Calu3 (cell line): ENCODE measurements at regions of chr15 and their contacts with region 1.

Region 1: DNA sequence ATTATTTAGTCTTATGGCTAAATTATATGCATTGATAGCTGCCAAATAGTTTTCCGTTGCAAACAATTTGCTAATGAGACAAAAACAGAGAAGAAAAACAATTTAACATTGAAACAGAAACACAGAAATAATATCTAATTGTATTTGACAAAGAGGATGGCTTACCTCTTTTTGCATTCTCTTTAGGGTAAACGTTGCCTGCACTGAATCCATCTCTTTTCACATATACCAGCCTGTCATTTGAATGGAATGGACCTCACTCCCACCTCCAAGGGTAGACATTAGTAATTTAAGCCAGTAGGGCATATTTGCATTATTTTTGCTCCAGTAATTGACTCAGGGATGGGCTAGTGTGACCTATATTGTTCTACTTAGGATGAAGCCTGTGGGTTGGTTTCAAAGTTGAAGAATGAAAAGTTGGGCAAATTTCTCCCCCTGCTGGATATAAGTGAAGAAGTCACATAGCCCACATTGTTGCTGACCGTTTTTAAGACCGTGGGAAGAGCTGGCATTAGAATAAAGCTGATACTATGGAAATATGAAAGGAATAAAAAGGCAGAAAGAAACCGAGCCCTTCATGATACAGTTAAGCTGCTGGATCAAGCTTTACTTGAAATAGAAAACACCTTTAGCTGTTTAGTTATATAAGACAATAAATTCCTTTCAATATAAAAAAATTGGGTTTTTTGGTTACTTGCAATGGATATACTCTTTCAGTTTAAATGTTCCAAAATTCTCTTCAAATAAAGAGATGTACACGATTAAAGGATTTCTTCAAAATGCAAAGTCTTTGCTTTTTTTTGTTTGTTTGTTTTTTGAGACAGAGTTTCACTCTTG is 26.9 kb downstream of the PIERCE2 start:
- DNase-seq: peak; percentile 34
- H3K4me3 Mint-ChIP-seq: no peak overlapping the region
- H3K27ac Mint-ChIP-seq: no peak overlapping the region
- H3K4me1 Mint-ChIP-seq: peaks cover 7% of the 10 kb centered on the region
- H3K27me3 Mint-ChIP-seq: no peaks in the 10 kb centered on the region
- CTCF ChIP-seq: peak; percentile 43

Region 2: GRCh38 chr15:53962332-53963241 is 1472.6 kb before region 1 on chr15:
- CTCF ChIA-PET with region 1: no interaction called
- intact Hi-C with region 1: loop called (anchors 5 kb)
- DNase-seq: peak; percentile 67
- H3K4me3 Mint-ChIP-seq: no peak overlapping the region
- H3K27ac Mint-ChIP-seq: no peak overlapping the region
- H3K4me1 Mint-ChIP-seq: no peaks in the 10 kb centered on the region
- H3K27me3 Mint-ChIP-seq: no peaks in the 10 kb centered on the region
- CTCF ChIP-seq: peak; percentile 73

Region 3: DNA sequence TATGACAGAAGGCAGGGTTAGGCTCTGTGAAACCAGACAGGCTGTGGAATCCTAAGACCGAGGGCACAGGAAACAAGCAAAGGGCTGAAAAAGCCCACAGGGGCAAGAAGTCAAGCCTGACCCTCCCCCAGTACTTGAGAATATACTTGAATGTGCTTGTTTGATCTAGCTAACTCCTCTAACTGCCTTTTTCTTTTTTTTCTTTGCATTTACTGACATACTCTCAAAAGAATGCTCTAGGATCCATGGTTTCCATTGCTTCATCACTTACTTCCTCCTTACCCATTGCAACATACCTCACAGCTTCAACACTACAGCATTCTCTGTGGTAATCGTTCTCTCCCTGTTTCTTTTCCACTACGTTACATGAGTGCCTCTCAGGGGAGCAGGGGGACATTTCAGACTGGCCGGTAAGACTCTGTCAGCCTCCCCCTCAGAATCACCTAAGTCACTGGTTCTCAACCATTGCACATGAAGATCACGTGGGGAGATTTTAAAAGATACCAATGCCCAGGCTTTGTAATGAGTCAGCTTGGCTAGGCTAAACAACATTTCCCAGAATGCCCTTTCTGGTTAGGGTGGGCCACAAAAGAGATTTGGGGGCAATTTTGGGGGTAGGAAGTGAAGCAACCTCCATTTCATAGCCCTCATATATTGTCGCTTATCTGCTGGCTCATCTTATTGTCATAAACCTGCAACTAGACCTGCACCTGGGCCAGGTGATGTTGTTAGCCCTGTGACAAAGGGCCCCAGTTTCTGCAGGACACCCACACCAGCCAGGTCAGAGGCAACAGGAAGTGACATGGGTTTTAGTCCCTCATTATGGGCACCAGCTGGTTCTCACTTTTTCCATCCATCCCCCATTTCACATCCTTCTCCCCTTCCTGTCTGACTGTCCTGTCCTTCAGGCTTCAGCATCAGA is 213.9 kb before region 1 on chr15:
- CTCF ChIA-PET with region 1: interaction called, 16 read pairs
- intact Hi-C with region 1: loop called (anchors 1 kb)
- DNase-seq: peak; percentile 45
- H3K4me3 Mint-ChIP-seq: peak overlapping the region; percentile 24
- H3K27ac Mint-ChIP-seq: peak overlapping the region; percentile 72
- H3K4me1 Mint-ChIP-seq: peaks cover 25% of the 10 kb centered on the region
- H3K27me3 Mint-ChIP-seq: no peaks in the 10 kb centered on the region
- CTCF ChIP-seq: no peak

Region 4: GRCh38 chr15:55318588-55319494 is 116.4 kb before region 1 on chr15 and contains the starts of genes PIGB and PIGBOS1:
- CTCF ChIA-PET with region 1: interaction called, 10 read pairs
- intact Hi-C with region 1: loop called (anchors 2 kb)
- DNase-seq: peak; percentile 85
- H3K4me3 Mint-ChIP-seq: peak within 1 kb of the TSS; percentile 98
- H3K27ac Mint-ChIP-seq: peak within 1 kb of the TSS; percentile 99
- H3K4me1 Mint-ChIP-seq: peaks cover 17% of the 10 kb centered on the region
- H3K27me3 Mint-ChIP-seq: no peaks in the 10 kb centered on the region
- CTCF ChIP-seq: no peak
- total RNA-seq, gene PIGB: 17.5 and 23.5 TPM in 2 replicates
- total RNA-seq, gene PIGBOS1: 16.6 and 17.1 TPM in 2 replicates

Region 5: DNA sequence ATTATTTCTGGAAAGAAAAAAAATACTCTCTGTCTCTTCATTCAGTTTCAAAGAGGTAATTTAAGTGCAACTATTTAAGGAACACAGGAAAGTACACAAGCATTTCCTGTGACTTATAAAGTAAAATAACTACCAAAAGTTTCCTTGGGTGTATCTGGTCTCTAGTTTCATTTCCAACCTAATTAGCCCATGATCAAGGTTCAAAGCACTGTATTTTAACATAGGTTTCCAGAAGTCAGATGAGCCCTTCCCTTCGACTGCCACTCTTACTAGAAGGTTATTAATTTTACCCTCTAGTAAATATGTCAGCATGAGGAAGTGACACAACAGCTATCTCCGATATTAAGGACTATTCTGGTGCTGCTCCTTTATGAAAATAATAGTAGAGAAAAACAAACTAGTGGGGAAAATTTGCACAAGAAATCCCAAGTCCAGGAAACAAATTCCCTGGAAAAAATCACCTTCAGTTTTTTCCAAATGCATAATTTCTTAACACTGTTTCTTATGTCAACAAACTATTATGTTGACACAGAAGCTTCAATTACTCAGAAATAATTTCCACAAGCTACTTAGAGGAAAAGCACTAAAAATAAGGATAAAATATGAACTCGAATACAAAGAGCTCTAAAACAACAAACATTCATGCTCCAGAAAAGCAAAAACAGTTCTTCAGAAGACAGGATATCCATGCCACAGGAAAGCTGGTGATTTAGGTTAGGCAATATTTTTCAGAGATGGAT is 62.3 kb before region 1 on chr15:
- CTCF ChIA-PET with region 1: interaction called, 6 read pairs
- intact Hi-C with region 1: loop called (anchors 10 kb)
- DNase-seq: no peak
- H3K4me3 Mint-ChIP-seq: no peak overlapping the region
- H3K27ac Mint-ChIP-seq: no peak overlapping the region
- H3K4me1 Mint-ChIP-seq: peaks cover 12% of the 10 kb centered on the region
- H3K27me3 Mint-ChIP-seq: no peaks in the 10 kb centered on the region
- CTCF ChIP-seq: no peak

Region 6: GRCh38 chr15:55407949-55408791 is 27.0 kb before region 1 on chr15 and contains the starts of genes CCPG1 and PIERCE2:
- CTCF ChIA-PET with region 1: interaction called, 19 read pairs
- intact Hi-C with region 1: no loop called
- DNase-seq: peak; percentile 97
- H3K4me3 Mint-ChIP-seq: peak within 1 kb of the TSS; percentile 81
- H3K27ac Mint-ChIP-seq: peak within 1 kb of the TSS; percentile 75
- H3K4me1 Mint-ChIP-seq: peaks cover 13% of the 10 kb centered on the region
- H3K27me3 Mint-ChIP-seq: no peaks in the 10 kb centered on the region
- CTCF ChIP-seq: peak; percentile 94
- total RNA-seq, gene CCPG1: 54.5 and 54.6 TPM in 2 replicates
- total RNA-seq, gene PIERCE2: 2.9 and 3.1 TPM in 2 replicates

Region 7: DNA sequence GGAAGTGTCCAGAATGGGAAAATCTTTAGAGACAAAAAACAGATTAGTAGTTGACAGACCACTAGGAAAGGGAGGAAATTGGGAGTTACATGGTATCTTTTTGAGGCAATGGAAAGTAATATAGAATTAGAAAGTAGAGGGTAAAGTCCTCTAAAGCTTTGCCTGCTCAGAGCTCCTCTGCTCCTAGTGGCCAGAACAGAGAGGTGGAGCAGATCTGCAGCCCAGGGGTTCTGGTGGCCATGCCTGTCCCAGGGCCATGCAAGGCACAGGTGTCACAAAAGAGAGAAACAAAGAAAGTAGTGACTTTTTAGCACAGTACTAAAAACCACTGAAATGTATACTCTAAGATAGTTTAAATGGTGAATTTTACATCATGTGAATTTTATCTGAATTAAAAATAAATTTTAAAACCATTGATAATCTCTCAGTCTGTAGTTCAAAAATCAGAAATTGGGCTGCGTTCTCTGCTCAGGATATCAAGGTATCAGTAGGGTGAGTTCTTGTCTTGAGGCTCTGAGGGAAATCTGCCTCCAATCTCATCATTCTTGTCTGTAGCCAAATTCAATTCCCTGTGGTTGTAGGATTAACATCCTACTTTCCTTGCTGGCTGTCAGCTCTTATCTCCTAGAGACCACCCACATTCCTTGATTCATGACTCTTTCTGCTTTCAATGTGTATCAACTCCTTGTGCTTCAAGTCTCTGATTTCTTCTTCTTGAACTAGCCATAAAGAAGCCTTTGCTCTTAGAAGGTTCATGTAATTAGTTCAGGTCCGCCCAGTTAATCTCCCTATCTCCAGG is 129.3 kb after region 1 on chr15:
- CTCF ChIA-PET with region 1: no interaction called
- intact Hi-C with region 1: no loop called
- DNase-seq: no peak
- H3K4me3 Mint-ChIP-seq: no peak overlapping the region
- H3K27ac Mint-ChIP-seq: no peak overlapping the region
- H3K4me1 Mint-ChIP-seq: no peaks in the 10 kb centered on the region
- H3K27me3 Mint-ChIP-seq: no peaks in the 10 kb centered on the region
- CTCF ChIP-seq: no peak

Region 8: DNA sequence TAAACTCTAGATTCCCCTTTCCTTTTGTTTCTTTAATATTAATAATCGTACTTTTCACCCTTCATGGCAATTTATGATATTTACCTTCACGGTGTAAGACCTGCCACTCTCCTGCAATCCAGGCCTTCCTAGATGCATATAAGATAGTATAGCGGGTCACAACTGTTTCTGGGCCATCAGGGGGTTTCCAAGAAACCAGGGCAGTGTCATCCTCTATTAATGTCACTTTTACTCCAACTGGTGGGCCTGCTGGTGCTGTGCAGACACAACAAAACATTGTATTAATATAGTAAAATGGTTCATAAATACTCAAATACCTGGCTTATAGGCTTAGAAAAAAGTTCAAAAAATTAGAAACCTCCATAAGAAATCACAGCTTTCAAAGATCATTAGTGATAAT is 201.9 kb after region 1 on chr15:
- CTCF ChIA-PET with region 1: interaction called, 6 read pairs
- intact Hi-C with region 1: loop called (anchors 2 kb)
- DNase-seq: no peak
- H3K4me3 Mint-ChIP-seq: no peak overlapping the region
- H3K27ac Mint-ChIP-seq: no peak overlapping the region
- H3K4me1 Mint-ChIP-seq: no peaks in the 10 kb centered on the region
- H3K27me3 Mint-ChIP-seq: no peaks in the 10 kb centered on the region
- CTCF ChIP-seq: no peak

Region 9: DNA sequence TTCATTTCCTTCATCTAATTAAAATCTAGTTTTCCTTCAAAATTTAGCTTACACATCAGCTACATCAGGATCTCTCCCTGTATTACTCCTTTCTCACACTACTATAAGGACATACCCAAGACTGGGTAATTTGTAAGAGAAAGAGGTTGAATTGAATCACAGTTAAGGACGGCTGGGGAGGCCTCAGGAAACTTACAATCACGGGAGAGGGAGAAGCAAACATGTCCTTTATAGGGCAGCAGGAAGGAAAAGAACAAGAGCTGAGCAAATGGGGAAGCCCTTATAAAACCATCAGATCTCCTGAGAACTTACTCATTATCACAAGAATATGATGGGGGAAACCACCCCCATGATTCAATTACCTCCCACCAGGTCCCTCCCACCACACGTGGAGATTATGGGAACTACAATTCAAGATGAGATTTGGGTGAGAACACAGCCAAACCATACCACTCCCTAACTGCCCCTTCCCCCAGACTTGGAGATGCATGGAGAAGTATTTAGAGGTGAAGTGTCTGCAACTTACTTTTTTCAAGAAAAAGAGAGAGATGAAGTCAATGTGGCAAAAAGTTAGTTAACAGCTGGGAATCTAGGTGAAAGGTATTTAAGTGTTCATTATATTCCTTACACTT is 286.5 kb after region 1 on chr15:
- CTCF ChIA-PET with region 1: no interaction called
- intact Hi-C with region 1: no loop called
- DNase-seq: no peak
- H3K4me3 Mint-ChIP-seq: no peak overlapping the region
- H3K27ac Mint-ChIP-seq: no peak overlapping the region
- H3K4me1 Mint-ChIP-seq: peaks cover 9% of the 10 kb centered on the region
- H3K27me3 Mint-ChIP-seq: no peaks in the 10 kb centered on the region
- CTCF ChIP-seq: no peak